Posterior cingulate gyrus (tissue), 11 donors: ENCODE measurements at regions of chr4 and their contacts with region 1.

Region 1: DNA sequence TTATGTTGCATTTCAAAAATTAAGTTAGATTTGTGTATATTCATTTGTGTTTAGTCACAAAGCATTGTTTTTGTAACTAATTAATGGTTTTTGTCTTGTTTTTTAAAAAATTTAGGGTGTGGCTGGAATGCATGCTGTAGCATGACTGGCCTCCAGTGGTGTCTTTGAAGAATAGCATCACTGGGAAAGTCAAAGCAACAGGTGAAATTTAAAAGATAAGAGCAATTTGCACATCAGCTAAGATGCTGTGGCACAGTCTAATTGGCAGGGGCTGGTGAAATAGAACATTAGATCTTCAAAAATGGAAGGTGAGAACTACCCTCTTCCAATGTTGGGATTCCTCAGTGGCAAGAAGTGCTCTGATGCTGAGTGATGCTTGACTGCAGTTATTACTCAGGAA is 45.3 kb downstream of the ANK2 start:
- DNase-seq: no peak

Region 2: DNA sequence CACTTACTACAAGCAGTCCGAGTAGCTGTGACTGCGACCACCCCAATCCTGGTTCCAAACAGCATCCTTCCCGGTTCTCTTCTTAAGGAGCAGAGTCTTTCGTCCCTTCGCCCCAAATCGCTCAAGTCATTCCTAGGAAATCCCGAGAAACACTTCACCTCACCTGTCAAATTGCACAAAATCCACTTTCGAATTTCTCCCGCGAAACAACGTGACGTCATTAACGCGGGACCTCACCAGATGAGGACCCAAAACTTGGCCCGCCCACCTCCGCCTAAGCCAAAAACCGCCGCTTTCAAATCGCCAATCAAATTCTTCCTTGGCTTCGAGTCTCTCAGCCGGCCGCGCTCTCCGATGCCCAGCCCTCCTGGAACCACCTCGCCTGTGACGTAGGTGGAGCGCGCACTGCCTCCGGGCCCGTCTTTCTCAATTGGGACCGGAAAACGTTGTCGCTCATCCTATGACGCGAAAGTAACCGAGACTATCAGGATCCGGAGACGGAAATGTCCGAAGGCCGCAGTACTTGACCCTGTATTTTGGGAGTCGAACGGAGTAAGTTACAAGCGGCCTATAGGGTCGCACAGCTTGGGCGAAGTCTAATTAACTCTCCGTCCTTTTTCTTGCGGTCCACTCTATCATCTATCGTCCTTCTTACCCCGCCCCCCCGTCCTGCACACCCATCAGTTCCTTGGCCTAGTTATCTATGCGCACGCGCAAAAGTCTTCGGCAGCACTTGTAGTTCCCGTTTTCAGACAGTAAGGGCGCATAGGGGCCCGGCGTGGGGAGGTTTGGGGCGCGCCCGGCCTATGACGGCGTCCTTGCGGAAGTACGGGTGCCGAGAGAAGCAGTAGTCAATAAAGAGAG is 457.9 kb before region 1 on chr4 and contains the starts of genes LARP7 and ZGRF1:
- intact Hi-C with region 1: loop called (anchors 5 kb)
- DNase-seq: peak; percentile 95 to 100 (median 98)

Region 3: DNA sequence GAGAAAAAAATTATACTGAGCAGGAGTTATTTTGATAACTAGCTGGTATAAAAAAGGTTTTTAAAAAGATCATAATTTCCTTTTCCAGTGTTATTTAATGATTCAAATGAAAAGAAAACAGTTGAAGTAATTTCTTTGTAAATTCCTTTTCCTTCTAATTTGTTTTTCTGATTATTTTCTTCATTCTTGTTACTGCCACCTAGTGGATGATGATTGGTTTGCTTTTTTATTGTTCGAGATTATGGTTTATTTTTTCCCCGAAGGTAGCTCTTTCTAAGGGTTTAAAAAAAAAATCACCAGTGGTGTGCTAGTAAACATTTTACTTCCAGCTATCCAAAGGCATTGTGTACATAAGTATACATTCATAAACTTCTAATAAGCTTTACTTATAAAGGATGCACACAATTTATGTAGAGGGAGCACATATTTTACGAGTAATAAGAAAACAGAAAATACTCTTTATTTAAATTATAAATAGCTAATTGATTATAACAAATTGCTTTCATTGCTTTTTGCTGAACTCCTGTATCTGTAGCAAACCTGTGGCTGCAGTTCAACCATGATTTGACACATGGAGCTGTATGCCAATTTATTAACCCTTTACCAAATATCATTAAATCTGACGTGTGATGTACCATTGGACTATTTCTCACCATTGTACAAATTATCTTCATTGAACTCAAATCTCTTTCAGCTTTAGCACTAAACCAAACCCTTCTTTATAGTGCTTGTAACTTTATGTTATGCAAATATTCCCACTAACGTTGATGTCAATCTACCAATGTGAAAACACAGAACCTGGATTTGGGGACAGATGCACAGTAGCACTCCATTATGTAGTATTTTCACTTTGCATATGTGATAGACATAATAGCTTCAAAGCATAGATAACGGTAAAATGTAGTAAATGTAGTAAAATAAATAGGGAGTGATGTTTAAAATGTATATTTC is 143.2 kb before region 1 on chr4:
- intact Hi-C with region 1: loop called (anchors 5 kb)
- DNase-seq: no peak

Region 4: GRCh38 chr4:113157086-113157857 is 62.5 kb after region 1 on chr4:
- intact Hi-C with region 1: no loop called
- DNase-seq: no peak

Region 5: DNA sequence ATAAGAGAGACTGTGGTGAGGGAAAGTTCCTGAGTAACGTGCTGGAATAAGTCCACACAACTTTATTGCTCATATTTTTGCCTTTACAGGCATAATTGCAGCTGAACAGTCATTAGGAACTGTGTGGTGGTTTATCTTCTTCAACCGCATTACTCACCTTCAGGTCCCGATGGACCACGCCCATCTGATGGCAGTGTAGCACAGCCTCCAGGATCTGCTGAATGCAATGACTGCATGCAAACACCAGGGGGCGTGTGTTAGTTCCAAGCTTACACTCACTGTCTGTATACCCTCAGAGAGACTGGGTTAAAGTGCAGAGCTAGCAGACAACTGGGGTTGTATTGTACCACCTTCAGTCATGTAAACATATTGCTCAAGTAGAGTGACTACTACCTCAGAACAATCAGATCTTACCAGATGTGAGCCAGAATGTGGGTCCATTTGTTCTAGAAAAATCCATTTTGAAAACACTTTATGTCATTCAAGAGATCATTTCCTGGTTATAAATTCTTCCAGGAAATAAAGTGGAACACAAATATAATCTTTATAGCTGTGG is 452.8 kb after region 1 on chr4:
- intact Hi-C with region 1: no loop called
- DNase-seq: peak; percentile 51 to 96 (median 80)